ENCODE measurements at regions of chr12 and their contacts with region 1.

Region 1: GRCh38 chr12:56688129-56688845 is at the start of gene PTGES3:
- DNase-seq: peak; percentile 99
- ATAC-seq: peak; percentile 80
- H3K4me3 ChIP-seq: peak within 1 kb of the TSS; percentile 72 to 99 (median 92)
- H3K4me3 Mint-ChIP-seq: peak within 1 kb of the TSS; percentile 97
- H3K27ac ChIP-seq: peak within 1 kb of the TSS; percentile 95
- H3K27ac Mint-ChIP-seq: peak within 1 kb of the TSS; percentile 98
- H3K4me1 ChIP-seq: peaks cover 29 to 44% of the 10 kb centered on the region in 2 donors
- H3K4me1 Mint-ChIP-seq: peaks cover 35% of the 10 kb centered on the region
- H3K27me3 ChIP-seq: no peaks in the 10 kb centered on the region
- H3K27me3 Mint-ChIP-seq: no peaks in the 10 kb centered on the region
- CTCF ChIP-seq: no peak
- total RNA-seq, gene PTGES3: 121 and 124 TPM in 2 replicates

Region 2: GRCh38 chr12:56041552-56042429 is 646.5 kb before region 1 on chr12 and contains the start of gene RPS26:
- CTCF ChIA-PET with region 1: no interaction called
- POLR2A ChIA-PET with region 1: no interaction called
- intact Hi-C with region 1: loop called (anchors 5 kb)
- DNase-seq: peak; percentile 99
- ATAC-seq: peak; percentile 93
- H3K4me3 ChIP-seq: peak within 1 kb of the TSS; percentile 70 to 99 (median 91)
- H3K4me3 Mint-ChIP-seq: peak within 1 kb of the TSS; percentile 98
- H3K27ac ChIP-seq: peak within 1 kb of the TSS; percentile 82 to 90
- H3K27ac Mint-ChIP-seq: peak within 1 kb of the TSS; percentile 97
- H3K4me1 ChIP-seq: peaks cover 19 to 21% of the 10 kb centered on the region in 2 donors
- H3K4me1 Mint-ChIP-seq: peaks cover 24% of the 10 kb centered on the region
- H3K27me3 ChIP-seq: no peaks in the 10 kb centered on the region
- H3K27me3 Mint-ChIP-seq: no peaks in the 10 kb centered on the region
- CTCF ChIP-seq: peak; percentile 67
- total RNA-seq, gene RPS26: 19.4 and 21.0 TPM in 2 replicates

Region 3: GRCh38 chr12:56488041-56488955 is 200.0 kb before region 1 on chr12 and contains the start of gene GLS2:
- CTCF ChIA-PET with region 1: no interaction called
- POLR2A ChIA-PET with region 1: interaction called, 3 read pairs
- intact Hi-C with region 1: loop called (anchors 5 kb)
- DNase-seq: peak; percentile 85
- ATAC-seq: peak; percentile 99
- H3K4me3 ChIP-seq: peak within 1 kb of the TSS; percentile 26 to 79 (median 73)
- H3K4me3 Mint-ChIP-seq: peak within 1 kb of the TSS; percentile 91
- H3K27ac ChIP-seq: no peak within 1 kb of the TSS
- H3K27ac Mint-ChIP-seq: peak within 1 kb of the TSS; percentile 80
- H3K4me1 ChIP-seq: peaks cover 0 to 19% of the 10 kb centered on the region in 2 donors
- H3K4me1 Mint-ChIP-seq: peaks cover 19% of the 10 kb centered on the region
- H3K27me3 ChIP-seq: peaks cover 0 to 9% (median 5%) of the 10 kb centered on the region in 4 experiments
- H3K27me3 Mint-ChIP-seq: peaks cover 17% of the 10 kb centered on the region
- CTCF ChIP-seq: no peak
- total RNA-seq, gene GLS2: 5.3 and 7.2 TPM in 2 replicates

Region 4: GRCh38 chr12:56645717-56646446 is 42.4 kb before region 1 on chr12 and contains the start of gene ATP5F1B:
- CTCF ChIA-PET with region 1: interaction called, 4 read pairs
- POLR2A ChIA-PET with region 1: interaction called, 10 read pairs
- intact Hi-C with region 1: loop called (anchors 1 kb)
- DNase-seq: peak; percentile 97
- ATAC-seq: peak; percentile 97
- H3K4me3 ChIP-seq: peak within 1 kb of the TSS; percentile 86 to 100 (median 94)
- H3K4me3 Mint-ChIP-seq: peak within 1 kb of the TSS; percentile 79
- H3K27ac ChIP-seq: peak within 1 kb of the TSS; percentile 85 to 91
- H3K27ac Mint-ChIP-seq: peak within 1 kb of the TSS; percentile 97
- H3K4me1 ChIP-seq: peaks cover 21 to 22% of the 10 kb centered on the region in 2 donors
- H3K4me1 Mint-ChIP-seq: peaks cover 29% of the 10 kb centered on the region
- H3K27me3 ChIP-seq: no peaks in the 10 kb centered on the region
- H3K27me3 Mint-ChIP-seq: no peaks in the 10 kb centered on the region
- CTCF ChIP-seq: no peak
- total RNA-seq, gene ATP5F1B: 217 and 230 TPM in 2 replicates

Region 5: GRCh38 chr12:56751712-56752598 is 63.7 kb after region 1 on chr12 and contains the start of gene PRIM1:
- CTCF ChIA-PET with region 1: interaction called, 4 read pairs
- POLR2A ChIA-PET with region 1: interaction called, 10 read pairs
- intact Hi-C with region 1: loop called (anchors 1 kb)
- DNase-seq: peak; percentile 88
- ATAC-seq: peak; percentile 82
- H3K4me3 ChIP-seq: peak within 1 kb of the TSS; percentile 90 to 100 (median 97)
- H3K4me3 Mint-ChIP-seq: peak within 1 kb of the TSS; percentile 97
- H3K27ac ChIP-seq: peak within 1 kb of the TSS; percentile 79 to 80
- H3K27ac Mint-ChIP-seq: peak within 1 kb of the TSS; percentile 96
- H3K4me1 ChIP-seq: peaks cover 38% of the 10 kb centered on the region in 2 donors
- H3K4me1 Mint-ChIP-seq: peaks cover 44% of the 10 kb centered on the region
- H3K27me3 ChIP-seq: no peaks in the 10 kb centered on the region
- H3K27me3 Mint-ChIP-seq: no peaks in the 10 kb centered on the region
- CTCF ChIP-seq: peak; percentile 21
- total RNA-seq, gene PRIM1: 25.2 and 25.4 TPM in 2 replicates

Measured in B cell (primary cell).